Panc1 (cell line): ENCODE measurements at regions of chr17 and their contacts with region 1.

Region 1: DNA sequence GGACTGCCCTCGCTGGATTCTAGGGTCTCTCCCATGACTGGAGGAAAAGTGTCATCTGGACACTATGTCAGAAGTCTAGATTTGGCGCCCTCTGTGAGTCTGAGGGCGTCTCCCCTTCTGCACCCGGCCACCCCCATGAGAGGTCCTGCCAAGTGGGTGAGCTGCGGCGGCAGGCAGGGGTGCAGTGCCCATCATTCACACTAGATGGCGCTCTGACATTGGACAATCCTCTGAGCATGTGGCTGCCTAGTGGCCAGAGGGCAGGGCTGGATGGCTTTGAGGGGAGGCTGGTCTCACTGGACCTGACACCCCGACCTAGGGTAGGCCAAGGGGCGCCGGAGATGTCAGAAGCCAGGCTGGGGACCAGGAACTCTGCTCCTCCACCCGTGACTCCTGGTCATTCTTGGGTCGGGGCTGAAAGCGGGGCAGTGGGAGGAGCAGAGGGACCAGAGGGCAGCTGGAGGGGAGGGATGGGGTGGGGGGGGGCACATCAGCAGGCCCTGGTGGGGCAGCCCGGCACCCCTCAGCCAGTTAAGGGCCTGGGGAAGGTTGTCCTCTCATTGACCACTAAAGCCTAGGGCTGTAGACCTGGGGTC is 28.0 kb downstream of the MRM1 start:
- DNase-seq: peak; percentile 36
- ATAC-seq: peak; percentile 91
- H3K4me3 ChIP-seq: no peak overlapping the region
- H3K27ac ChIP-seq: no peak overlapping the region
- H3K4me1 ChIP-seq: no peaks in the 10 kb centered on the region
- H3K27me3 ChIP-seq: no peaks in the 10 kb centered on the region
- CTCF ChIP-seq: peak; percentile 82

Region 2: DNA sequence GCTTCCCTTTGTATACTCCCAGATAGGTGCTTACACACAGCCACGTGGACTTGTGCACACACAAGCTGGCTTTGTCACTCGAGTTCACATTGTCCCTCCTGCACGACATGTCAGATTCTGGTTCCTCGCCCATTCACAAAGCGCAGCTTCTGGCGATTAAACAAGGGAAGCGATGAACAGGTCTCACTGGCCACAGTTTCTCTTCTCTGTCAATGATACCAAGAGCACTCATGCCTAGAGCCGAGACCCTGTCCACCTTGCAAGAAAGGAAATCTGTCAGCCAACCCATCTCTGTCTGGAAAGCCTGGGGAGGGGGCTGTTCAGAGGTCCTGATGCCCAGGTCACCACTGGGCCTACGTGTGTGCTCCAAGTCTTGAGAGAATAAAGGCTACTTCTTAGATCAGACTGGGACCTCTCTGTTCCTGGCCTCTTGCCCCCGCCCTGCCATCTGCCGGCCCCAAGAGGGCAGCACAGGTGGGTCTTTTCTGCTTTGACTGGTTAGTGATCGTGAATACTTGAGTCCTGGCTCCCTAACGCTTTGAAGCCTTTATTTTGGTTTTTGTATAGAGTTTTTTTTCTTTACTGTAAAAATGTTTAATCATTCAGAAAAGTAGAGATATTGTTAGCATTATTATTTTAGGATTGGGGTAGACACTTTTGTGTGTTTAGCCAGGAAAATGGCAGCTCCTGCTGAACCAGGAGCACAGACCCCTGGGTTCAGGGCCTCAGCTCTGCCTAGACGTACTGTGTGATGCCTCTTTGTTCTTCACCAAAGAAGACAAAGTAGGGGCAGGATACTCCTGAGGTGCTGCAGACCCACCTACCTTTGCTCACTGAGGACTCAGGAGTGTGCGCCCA is 76.8 kb after region 1 on chr17:
- CTCF ChIA-PET with region 1: interaction called, 3 read pairs
- POLR2A ChIA-PET with region 1: no interaction called
- in situ Hi-C with region 1: no loop called
- intact Hi-C with region 1: loop called (anchors 10 kb)
- DNase-seq: peak; percentile 10
- ATAC-seq: peak; percentile 93
- H3K4me3 ChIP-seq: no peak overlapping the region
- H3K27ac ChIP-seq: no peak overlapping the region
- H3K4me1 ChIP-seq: no peaks in the 10 kb centered on the region
- H3K27me3 ChIP-seq: peaks cover 9% of the 10 kb centered on the region; the same call in 1 of the 2 replicates
- CTCF ChIP-seq: peak; percentile 77

Region 3: DNA sequence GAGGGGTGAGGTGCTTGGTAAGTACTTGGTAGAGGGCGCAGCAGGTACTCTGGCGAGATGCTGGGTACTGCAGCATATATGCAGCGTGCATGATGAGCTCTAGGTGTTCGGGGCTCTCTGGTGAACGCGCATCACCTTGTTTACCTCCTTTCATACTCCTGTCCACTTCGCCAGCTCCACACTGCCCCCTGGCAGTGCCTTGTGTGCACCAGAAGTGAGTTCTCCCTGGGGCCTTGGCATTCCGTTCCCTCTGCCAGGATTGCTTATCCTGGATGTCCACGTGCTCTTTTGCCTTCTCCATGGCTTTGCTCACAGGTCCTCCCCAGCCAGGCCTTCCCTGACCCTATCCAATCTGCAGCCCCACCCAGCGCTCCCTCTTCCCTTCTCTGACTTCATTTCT is 126.2 kb after region 1 on chr17:
- CTCF ChIA-PET with region 1: no interaction called
- POLR2A ChIA-PET with region 1: no interaction called
- in situ Hi-C with region 1: no loop called
- intact Hi-C with region 1: loop called (anchors 5 kb)
- DNase-seq: no peak
- ATAC-seq: peak; percentile 81
- H3K4me3 ChIP-seq: no peak overlapping the region
- H3K27ac ChIP-seq: no peak overlapping the region
- H3K4me1 ChIP-seq: no peaks in the 10 kb centered on the region
- H3K27me3 ChIP-seq: no peaks in the 10 kb centered on the region
- CTCF ChIP-seq: peak; percentile 62